ENCODE measurements at regions of chr6 and their contacts with region 1.

Region 1: DNA sequence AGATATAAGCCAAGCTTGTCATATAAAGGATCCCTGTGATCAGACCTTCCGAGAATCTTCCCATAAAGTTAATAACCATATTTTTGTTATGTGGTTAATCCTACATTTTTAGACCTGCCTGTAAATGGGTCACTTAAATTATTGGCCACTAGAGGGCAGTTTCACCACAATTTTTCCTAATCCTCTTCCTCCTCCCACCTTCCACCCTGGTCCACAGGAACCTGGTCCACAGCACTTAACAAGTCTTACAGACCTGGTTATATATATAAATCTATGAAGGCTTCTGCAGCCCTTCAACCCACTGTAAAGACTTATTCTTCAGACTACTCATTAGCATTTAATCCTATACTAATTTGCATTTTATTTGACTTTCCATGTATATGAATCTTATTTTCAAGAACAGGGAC is 28.3 kb downstream of the MRS2 start:
- DNase-seq: no peak
- H3K4me3 ChIP-seq: no peak overlapping the region
- H3K27me3 ChIP-seq: no peaks in the 10 kb centered on the region
- CTCF ChIP-seq: peak; percentile 58

Region 2: GRCh38 chr6:24415753-24416152 is 15.3 kb before region 1 on chr6:
- CTCF ChIA-PET with region 1: interaction called, 11 read pairs
- POLR2A ChIA-PET with region 1: no interaction called
- DNase-seq: no peak
- H3K4me3 ChIP-seq: no peak overlapping the region
- H3K27me3 ChIP-seq: no peaks in the 10 kb centered on the region
- CTCF ChIP-seq: no peak

Region 3: GRCh38 chr6:24440897-24441598 is 10.0 kb after region 1 on chr6:
- CTCF ChIA-PET with region 1: interaction called, 14 read pairs
- POLR2A ChIA-PET with region 1: no interaction called
- DNase-seq: no peak
- H3K4me3 ChIP-seq: no peak overlapping the region
- H3K27me3 ChIP-seq: no peaks in the 10 kb centered on the region; the same call in 1 of the 2 replicates
- CTCF ChIP-seq: no peak

Region 4: GRCh38 chr6:24520929-24521546 is 90.0 kb after region 1 on chr6:
- CTCF ChIA-PET with region 1: interaction called, 13 read pairs
- POLR2A ChIA-PET with region 1: no interaction called
- DNase-seq: no peak
- H3K4me3 ChIP-seq: no peak overlapping the region
- H3K27me3 ChIP-seq: no peaks in the 10 kb centered on the region
- CTCF ChIP-seq: peak; percentile 90

Region 5: DNA sequence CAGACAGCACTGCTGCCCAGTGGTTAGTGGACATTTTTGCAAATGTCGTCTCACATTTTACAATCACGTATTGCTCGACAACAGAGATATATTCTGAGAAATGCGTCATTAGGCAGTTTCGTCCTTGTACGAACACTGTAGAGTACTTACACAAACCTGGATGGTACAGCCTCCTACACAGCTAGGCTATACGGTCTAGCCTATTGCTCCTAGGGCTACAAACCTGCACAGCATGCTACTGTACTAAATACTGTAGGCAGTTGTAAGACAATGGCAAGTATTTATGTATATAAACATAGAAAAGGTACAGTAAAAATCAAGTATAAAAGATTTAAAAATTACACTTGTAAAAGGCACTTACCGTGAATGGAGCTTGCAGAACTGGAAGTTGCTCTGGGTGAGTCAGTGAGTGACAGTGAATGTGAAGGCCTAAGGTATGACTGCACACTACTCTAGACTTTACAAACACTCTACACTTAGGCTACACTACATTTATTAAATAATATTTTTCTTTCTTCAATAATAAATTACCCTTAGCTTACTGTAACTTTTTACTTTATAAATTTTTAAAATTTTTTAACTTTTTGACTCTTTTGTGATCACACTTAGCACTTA is 106.8 kb after region 1 on chr6:
- CTCF ChIA-PET with region 1: no interaction called
- POLR2A ChIA-PET with region 1: no interaction called
- DNase-seq: no peak
- H3K4me3 ChIP-seq: no peak overlapping the region
- H3K27me3 ChIP-seq: no peaks in the 10 kb centered on the region
- CTCF ChIP-seq: no peak

Measured in BJ (cell line).